ENCODE measurements at regions of chr2 and their contacts with region 1.

Region 1: DNA sequence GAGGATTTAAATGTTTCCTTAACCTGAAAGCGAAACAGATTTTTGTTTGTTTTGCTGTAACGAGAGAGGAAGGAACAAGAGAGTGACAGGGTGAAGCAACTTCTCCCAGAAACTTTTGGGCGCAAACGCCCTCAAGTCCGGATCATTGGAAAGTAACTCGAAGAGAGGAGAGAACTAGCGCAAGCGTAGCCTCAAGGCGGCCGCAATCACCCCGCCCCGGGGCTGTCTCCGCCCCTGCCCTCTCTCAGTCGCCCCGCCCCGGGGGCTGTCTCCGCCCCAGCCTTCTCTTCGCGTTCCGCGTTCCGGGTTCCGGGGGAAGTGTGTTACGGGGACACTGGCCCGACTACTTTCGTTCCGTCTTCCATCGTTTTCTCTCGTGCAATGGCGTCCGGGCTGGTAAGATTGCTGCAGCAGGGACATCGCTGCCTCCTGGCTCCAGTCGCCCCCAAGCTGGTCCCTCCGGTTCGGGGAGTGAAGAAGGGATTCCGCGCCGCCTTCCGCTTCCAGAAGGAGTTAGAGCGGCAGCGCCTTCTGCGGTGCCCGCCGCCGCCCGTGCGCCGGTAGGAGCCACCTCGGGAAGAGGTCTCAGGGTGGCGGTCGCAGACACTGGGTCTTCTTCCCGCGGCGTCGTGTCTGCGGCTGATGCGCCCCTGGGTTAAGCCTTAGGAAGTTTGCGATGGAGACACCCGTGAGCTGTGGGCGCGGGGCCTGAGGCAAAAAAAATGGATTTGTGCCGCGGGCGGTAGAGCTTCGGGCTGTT is at the start of gene MRPL44:
- DNase-seq: peak; percentile 97
- H3K4me3 Mint-ChIP-seq: peak within 1 kb of the TSS; percentile 91
- H3K27ac Mint-ChIP-seq: peak within 1 kb of the TSS; percentile 88
- H3K4me1 Mint-ChIP-seq: peaks cover 80% of the 10 kb centered on the region
- H3K27me3 Mint-ChIP-seq: no peaks in the 10 kb centered on the region
- total RNA-seq, gene MRPL44: 39.1 to 41.3 TPM

Region 2: DNA sequence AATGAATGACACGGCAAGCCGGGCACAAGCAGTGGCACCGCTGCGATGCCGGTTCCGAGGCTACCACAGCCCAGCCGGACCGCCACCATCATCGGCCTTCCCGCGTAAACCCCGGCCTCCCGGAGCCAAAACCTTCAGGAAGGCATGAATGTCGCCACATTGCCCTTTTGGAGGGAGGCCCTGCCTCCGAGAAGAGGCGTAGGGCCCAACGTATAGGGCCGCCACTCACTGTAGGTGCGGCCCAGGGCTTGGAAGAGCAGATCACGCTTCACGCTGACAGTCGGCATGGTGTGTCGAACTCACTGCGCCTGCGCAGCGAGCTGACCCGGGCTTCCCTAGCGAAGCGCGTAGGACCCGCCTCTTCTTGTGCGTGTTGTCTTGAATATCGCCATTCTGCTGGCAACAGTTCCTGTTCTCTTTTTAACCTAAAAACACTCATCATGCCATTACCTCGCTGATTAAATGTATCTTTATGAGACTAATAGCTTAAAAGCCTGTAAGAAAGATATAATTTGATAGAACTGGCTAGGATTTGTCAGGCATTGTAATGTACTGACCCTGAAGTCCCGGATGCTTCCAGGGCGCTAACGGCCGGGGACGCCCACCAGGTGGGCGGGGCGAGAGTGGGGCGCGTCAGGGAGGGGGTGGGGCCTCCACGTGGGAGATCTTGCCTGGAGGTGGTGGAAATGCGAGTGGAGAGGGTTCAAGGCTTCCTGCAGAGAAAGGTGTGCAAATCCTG is 1301.3 kb before region 1 on chr2 and contains the start of gene FARSB:
- CTCF ChIA-PET with region 1: no interaction called
- intact Hi-C with region 1: loop called (anchors 5 kb)
- DNase-seq: peak; percentile 94
- H3K4me3 Mint-ChIP-seq: peak within 1 kb of the TSS; percentile 98
- H3K27ac Mint-ChIP-seq: peak within 1 kb of the TSS; percentile 98
- H3K4me1 Mint-ChIP-seq: peaks cover 37% of the 10 kb centered on the region
- H3K27me3 Mint-ChIP-seq: no peaks in the 10 kb centered on the region
- total RNA-seq, gene FARSB: 46.4 to 46.8 TPM

Region 3: DNA sequence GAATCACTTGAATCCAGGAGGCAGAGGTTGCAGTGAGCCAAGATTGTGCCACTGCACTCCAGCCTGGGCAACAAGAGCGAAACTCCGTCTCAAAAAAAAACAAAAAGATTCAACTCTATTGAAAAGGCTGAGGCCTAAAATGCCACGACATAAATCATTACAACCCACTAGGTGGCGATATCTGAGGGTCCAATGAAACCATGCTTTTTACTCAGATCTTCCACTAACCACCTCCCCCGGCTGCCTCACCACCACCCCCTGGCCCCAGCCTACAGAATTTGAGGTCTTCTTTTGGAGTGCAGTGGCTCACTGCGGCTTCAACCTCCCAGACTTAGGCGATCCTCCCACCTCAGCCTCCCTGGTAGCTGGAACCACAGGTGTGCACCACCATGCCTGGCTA is 177.4 kb before region 1 on chr2:
- CTCF ChIA-PET with region 1: no interaction called
- intact Hi-C with region 1: loop called (anchors 5 kb)
- DNase-seq: peak; percentile 61
- H3K4me3 Mint-ChIP-seq: no peak overlapping the region
- H3K27ac Mint-ChIP-seq: no peak overlapping the region
- H3K4me1 Mint-ChIP-seq: no peaks in the 10 kb centered on the region
- H3K27me3 Mint-ChIP-seq: no peaks in the 10 kb centered on the region

Region 4: GRCh38 chr2:223970343-223971128 is 13.3 kb after region 1 on chr2:
- CTCF ChIA-PET with region 1: interaction called, 35 read pairs
- intact Hi-C with region 1: no loop called
- DNase-seq: peak; percentile 77
- H3K4me3 Mint-ChIP-seq: no peak overlapping the region
- H3K27ac Mint-ChIP-seq: no peak overlapping the region
- H3K4me1 Mint-ChIP-seq: peaks cover 11% of the 10 kb centered on the region
- H3K27me3 Mint-ChIP-seq: no peaks in the 10 kb centered on the region

Region 5: GRCh38 chr2:224039124-224039940 is 82.1 kb after region 1 on chr2 and contains the start of gene SERPINE2:
- CTCF ChIA-PET with region 1: no interaction called
- intact Hi-C with region 1: loop called (anchors 1 kb)
- DNase-seq: peak; percentile 81
- H3K4me3 Mint-ChIP-seq: peak within 1 kb of the TSS; percentile 93
- H3K27ac Mint-ChIP-seq: peak within 1 kb of the TSS; percentile 76
- H3K4me1 Mint-ChIP-seq: peaks cover 30% of the 10 kb centered on the region
- H3K27me3 Mint-ChIP-seq: peaks cover 29% of the 10 kb centered on the region
- total RNA-seq, gene SERPINE2: 64.6 to 69.5 TPM

Region 6: DNA sequence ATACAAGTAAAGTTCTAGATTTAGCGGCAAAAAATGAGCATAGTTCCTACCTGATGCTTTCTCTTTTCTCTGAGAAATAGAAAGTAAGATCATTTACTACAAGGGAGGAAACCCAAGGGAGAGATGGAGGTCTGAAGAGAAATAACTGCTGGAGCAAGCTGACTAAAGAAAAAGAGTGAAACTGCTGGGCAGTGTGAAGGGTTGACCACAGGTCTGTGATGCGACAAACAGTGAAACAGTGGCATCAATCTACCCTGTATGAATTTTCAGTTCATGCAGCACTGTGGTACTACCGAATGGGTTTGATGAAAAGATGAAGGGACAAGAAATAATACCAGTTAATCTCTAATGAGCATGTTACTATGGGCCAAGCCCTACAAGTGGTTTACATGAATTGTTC is 575.7 kb after region 1 on chr2:
- CTCF ChIA-PET with region 1: no interaction called
- intact Hi-C with region 1: no loop called
- DNase-seq: no peak
- H3K4me3 Mint-ChIP-seq: no peak overlapping the region
- H3K27ac Mint-ChIP-seq: peak overlapping the region; percentile 46
- H3K4me1 Mint-ChIP-seq: peaks cover 39% of the 10 kb centered on the region
- H3K27me3 Mint-ChIP-seq: no peaks in the 10 kb centered on the region

Region 7: DNA sequence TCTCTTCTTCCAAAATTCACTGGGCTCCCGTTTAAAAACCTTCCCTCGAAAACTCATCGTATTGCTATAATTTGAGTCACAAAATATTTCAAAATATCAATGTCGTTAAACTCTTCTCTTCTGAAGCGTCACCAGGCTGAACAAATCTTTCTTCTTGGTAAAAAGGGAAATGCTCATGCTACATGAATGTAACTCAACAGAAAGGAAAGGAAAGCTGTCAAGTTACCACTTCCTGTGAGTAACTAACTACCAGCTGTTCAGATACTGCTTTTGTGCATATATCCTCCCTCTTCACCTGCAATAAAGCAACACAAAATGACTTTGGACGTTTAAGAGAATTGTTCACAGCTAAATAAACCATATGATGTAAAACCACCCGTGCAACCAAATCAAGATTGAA is 989.6 kb after region 1 on chr2:
- CTCF ChIA-PET with region 1: no interaction called
- intact Hi-C with region 1: loop called (anchors 5 kb)
- DNase-seq: no peak
- H3K4me3 Mint-ChIP-seq: peak overlapping the region; percentile 82
- H3K27ac Mint-ChIP-seq: peak overlapping the region; percentile 94
- H3K4me1 Mint-ChIP-seq: peaks cover 58% of the 10 kb centered on the region
- H3K27me3 Mint-ChIP-seq: no peaks in the 10 kb centered on the region